Endothelial cell of umbilical vein (primary cell): ENCODE measurements at regions of chr4 and their contacts with region 1.

Region 1: GRCh38 chr4:170089668-170090351 is at the start of gene AADAT:
- DNase-seq: peak; percentile 44
- H3K4me3 ChIP-seq: peak within 1 kb of the TSS; percentile 3 to 68 (median 44)
- H3K27ac ChIP-seq: no peak within 1 kb of the TSS
- H3K4me1 ChIP-seq: peaks cover 3% of the 10 kb centered on the region
- H3K27me3 ChIP-seq: no peaks in the 10 kb centered on the region
- CTCF ChIP-seq: peak; percentile 68 to 78
- POLR2A ChIP-seq: no peak
- total RNA-seq, gene AADAT: 2.5 and 3.1 TPM in 2 replicates

Region 2: DNA sequence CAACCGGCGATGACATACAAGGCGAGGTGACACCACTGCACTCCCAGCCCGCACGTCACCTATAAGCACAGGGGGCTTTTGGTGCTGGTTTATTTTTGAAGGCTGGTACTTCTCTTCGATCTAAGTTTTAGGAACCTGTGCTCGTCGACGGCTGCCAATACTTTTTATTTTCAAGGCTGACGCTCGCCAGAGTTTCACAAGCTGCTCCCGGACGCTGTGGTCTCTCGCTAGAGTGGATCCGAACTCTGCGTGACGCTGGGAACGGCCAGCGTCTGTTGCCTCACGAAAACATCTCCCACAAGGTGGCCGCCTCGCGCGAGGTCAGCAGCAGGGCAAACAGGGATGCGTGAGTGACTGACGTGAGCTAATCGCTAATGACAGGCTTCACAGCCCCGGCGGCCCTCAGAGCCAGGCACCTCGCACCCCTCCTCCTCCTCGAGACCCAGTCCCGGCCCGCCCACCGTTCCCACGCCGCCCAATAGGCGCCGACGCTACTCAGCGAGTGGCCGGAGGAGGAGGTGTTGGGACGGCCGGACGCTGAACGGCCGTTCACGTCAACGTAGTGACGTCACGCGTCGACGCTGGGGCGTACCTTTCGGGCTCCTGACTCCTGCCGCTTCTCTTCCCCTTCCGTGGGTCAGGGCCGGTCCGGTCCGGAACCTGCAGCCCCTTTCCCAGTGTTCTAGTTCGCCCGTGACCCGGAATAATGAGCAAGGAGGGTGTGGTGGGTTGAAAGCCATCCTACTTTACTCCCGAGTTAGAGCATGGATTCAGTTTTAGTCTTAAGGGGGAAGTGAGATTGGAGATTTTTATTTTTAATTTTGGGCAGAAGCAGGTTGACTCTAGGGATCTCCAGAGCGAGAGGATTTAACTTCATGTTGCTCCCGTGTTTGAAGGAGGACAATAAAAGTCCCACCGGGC is 469.6 kb before region 1 on chr4 and contains the start of gene CLCN3:
- CTCF ChIA-PET with region 1: no interaction called
- POLR2A ChIA-PET with region 1: no interaction called
- dilution Hi-C with region 1: no loop called
- intact Hi-C with region 1: loop called (anchors 1 kb)
- DNase-seq: peak; percentile 98
- H3K4me3 ChIP-seq: peak within 1 kb of the TSS; percentile 81 to 98 (median 91)
- H3K27ac ChIP-seq: peak within 1 kb of the TSS; percentile 92
- H3K4me1 ChIP-seq: peaks cover 19% of the 10 kb centered on the region
- H3K27me3 ChIP-seq: no peaks in the 10 kb centered on the region
- CTCF ChIP-seq: peak in 1 of 2 donors; percentile 14
- POLR2A ChIP-seq: peak; percentile 94
- total RNA-seq, gene CLCN3: 49.0 and 51.4 TPM in 2 replicates

Region 3: GRCh38 chr4:169791527-169792156 is 298.2 kb before region 1 on chr4:
- CTCF ChIA-PET with region 1: no interaction called
- POLR2A ChIA-PET with region 1: no interaction called
- dilution Hi-C with region 1: no loop called
- intact Hi-C with region 1: loop called (anchors 5 kb)
- DNase-seq: peak; percentile 64
- H3K4me3 ChIP-seq: no peak overlapping the region
- H3K27ac ChIP-seq: no peak overlapping the region
- H3K4me1 ChIP-seq: no peaks in the 10 kb centered on the region
- H3K27me3 ChIP-seq: peaks cover 4 to 6% of the 10 kb centered on the region in 2 experiments
- CTCF ChIP-seq: peak; percentile 40 to 41
- POLR2A ChIP-seq: no peak

Region 4: GRCh38 chr4:170027181-170027829 is 62.5 kb before region 1 on chr4:
- CTCF ChIA-PET with region 1: no interaction called
- POLR2A ChIA-PET with region 1: no interaction called
- dilution Hi-C with region 1: no loop called
- intact Hi-C with region 1: loop called (anchors 1 kb)
- DNase-seq: peak; percentile 86
- H3K4me3 ChIP-seq: peak overlapping the region; percentile 37 to 93 (median 92)
- H3K27ac ChIP-seq: no peak overlapping the region
- H3K4me1 ChIP-seq: peaks cover 11% of the 10 kb centered on the region
- H3K27me3 ChIP-seq: peaks cover 26 to 55% of the 10 kb centered on the region in 2 experiments
- CTCF ChIP-seq: no peak
- POLR2A ChIP-seq: no peak